ENCODE measurements at regions of chr3 and their contacts with region 1.

Region 1: DNA sequence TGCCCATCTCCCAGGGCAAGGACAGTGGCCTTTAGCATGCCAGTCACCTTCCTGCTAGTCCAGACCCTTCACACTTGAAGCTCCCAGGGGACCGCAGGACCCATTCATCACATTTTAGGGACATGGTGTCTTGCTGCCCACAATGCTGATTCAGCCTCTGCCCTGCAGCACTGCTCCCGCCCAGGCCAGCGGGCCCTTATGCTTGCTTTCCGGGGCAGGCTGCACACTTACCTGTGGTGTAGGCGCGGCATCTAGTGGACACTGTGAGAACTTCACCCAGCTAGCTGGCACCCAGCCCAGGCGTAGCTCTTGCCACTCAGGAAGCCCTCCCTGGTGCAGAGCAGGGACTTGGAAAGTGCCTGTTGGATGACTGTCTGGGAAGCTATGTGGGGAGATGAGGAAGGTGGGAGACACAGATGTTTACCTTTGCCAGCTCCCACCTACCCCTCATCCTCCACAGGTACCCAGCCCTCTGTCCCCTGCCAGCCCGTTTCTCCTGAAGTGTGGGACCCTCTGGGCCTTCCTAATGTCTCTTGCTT is 26.2 kb upstream of the NR2C2 start:
- DNase-seq: peak; percentile 26
- H3K4me3 ChIP-seq: no peak overlapping the region
- H3K27me3 ChIP-seq: no peaks in the 10 kb centered on the region; the same call in 1 of the 2 replicates
- CTCF ChIP-seq: peak; percentile 96

Region 2: DNA sequence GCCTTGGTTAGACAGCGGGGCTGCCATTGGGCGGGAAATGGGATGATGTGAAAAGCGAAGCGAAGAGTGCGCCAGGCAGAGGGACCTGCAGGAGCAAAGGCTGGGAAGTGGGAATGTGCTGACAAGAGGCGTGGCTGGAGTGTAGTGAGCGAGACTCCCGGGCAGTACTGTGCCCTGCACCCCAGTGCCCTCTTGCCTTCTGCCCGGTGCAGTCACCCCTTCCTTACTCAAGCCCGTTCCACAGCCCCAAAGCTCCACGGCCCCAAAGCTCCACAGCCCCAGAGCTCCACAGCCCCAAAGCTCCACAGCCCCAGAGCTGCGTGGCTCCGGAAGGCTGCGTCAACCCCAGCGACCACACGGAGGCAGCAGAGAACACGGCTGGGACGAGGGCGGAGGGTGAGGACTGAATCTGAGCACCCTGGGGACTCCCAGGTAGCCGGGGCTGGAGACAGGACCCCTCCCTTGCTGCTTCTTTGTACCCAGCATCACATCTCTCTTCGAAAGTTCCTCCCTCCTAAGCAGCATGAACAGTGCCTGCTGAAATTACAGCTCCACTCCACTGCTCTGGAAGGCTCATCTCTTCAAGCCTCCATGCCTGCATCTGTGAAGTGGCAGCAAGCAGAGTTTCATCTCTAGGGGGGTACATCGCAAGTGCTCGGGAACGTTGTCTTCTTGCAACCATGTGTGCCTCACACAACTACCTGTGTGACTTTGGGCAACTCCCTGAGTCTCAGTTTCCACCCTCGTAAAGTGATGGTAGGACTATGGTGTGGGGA is 1263.3 kb before region 1 on chr3:
- CTCF ChIA-PET with region 1: interaction called, 19 read pairs
- POLR2A ChIA-PET with region 1: no interaction called
- DNase-seq: no peak
- H3K4me3 ChIP-seq: no peak overlapping the region
- H3K27me3 ChIP-seq: peaks cover 12% of the 10 kb centered on the region
- CTCF ChIP-seq: peak; percentile 97

Region 3: GRCh38 chr3:14508961-14509795 is 412.0 kb before region 1 on chr3:
- CTCF ChIA-PET with region 1: interaction called, 11 read pairs
- POLR2A ChIA-PET with region 1: no interaction called
- DNase-seq: no peak
- H3K4me3 ChIP-seq: no peak overlapping the region; the same call in 1 of the 2 replicates
- H3K27me3 ChIP-seq: peaks cover 2% of the 10 kb centered on the region; the same call in 1 of the 2 replicates
- CTCF ChIP-seq: peak; percentile 93

Region 4: GRCh38 chr3:14672588-14672987 is 248.6 kb before region 1 on chr3:
- CTCF ChIA-PET with region 1: interaction called, 11 read pairs
- POLR2A ChIA-PET with region 1: no interaction called
- DNase-seq: no peak
- H3K4me3 ChIP-seq: no peak overlapping the region
- H3K27me3 ChIP-seq: no peaks in the 10 kb centered on the region
- CTCF ChIP-seq: no peak

Region 5: GRCh38 chr3:14678015-14678503 is 243.1 kb before region 1 on chr3:
- CTCF ChIA-PET with region 1: interaction called, 11 read pairs
- POLR2A ChIA-PET with region 1: no interaction called
- DNase-seq: no peak
- H3K4me3 ChIP-seq: no peak overlapping the region
- H3K27me3 ChIP-seq: no peaks in the 10 kb centered on the region
- CTCF ChIP-seq: no peak

Region 6: DNA sequence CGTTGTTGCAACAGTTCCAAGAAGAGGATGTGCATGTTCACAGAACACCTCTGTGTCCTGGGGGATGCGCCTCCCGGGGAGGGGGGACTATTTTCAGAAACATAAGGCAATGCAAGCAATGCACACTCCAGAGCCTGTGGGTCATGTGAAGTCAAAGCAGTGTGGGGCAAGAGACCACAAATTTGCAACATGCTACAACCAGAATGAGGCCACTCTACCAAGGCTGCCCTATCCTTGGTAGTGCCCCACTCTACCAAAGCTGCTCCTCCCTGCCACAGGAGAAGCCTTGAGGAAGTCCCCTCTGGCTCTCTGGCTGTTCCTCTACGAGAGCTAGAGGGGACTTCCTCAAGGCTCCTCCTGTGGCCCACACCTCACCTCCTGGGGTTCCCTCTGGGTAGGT is 17.8 kb after region 1 on chr3:
- CTCF ChIA-PET with region 1: interaction called, 10 read pairs
- POLR2A ChIA-PET with region 1: no interaction called
- DNase-seq: no peak
- H3K4me3 ChIP-seq: no peak overlapping the region
- H3K27me3 ChIP-seq: no peaks in the 10 kb centered on the region
- CTCF ChIP-seq: no peak

Region 7: GRCh38 chr3:14988988-14989394 is 67.8 kb after region 1 on chr3:
- CTCF ChIA-PET with region 1: no interaction called
- POLR2A ChIA-PET with region 1: no interaction called
- DNase-seq: no peak
- H3K4me3 ChIP-seq: no peak overlapping the region
- H3K27me3 ChIP-seq: no peaks in the 10 kb centered on the region
- CTCF ChIP-seq: no peak

Region 8: DNA sequence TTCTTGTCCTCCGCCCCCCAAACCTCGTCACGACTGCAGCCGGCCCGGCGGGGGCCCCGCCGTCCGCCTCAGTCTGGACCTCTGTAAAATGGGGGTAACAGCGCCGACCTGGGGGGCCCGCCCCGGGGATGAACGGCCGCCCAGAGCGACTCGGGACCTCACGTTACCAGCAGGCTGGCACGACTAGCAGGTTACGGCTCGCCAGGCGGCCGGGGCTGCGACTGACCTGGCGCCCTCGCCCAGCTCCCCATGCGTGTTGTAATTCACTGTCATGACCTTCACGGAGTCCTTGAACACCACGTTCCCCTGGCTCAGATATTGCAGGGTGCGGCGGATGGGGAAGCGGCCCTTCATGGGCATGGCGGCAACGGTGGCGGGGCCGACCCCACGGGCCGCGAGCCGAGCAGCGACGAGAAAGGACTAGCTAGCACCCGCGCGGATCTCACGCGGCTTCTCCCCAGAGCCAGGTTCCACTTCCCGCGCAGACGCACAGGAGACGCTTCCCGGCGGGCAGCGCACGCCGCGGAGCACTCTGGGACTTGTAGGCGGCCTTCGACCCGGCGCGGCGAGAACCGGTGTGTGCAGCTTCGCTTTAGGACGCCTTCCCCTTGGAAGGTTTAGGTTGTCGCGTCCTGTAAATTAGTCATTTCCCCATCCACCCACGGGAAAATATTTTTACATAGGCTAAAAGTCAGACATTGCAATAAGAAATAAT is 143.8 kb after region 1 on chr3 and contains the start of gene MRPS25:
- CTCF ChIA-PET with region 1: interaction called, 12 read pairs
- POLR2A ChIA-PET with region 1: no interaction called
- DNase-seq: peak; percentile 68
- H3K4me3 ChIP-seq: peak within 1 kb of the TSS; percentile 79
- H3K27me3 ChIP-seq: no peaks in the 10 kb centered on the region
- CTCF ChIP-seq: no peak
- polyA plus RNA-seq, gene MRPS25: 17.0 and 20.5 TPM in 2 replicates

Measured in BJ (cell line).